ENCODE measurements at regions of chr12 and their contacts with region 1.

Region 1: GRCh38 chr12:127108360-127109215 is 1158.4 kb upstream of the TMEM132C start:
- DNase-seq: peak; percentile 38 to 88 (median 72)

Region 2: GRCh38 chr12:127293507-127294310 is 185.1 kb after region 1 on chr12:
- intact Hi-C with region 1: loop called (anchors 5 kb)
- DNase-seq: peak; percentile 10 to 84 (median 62)

Measured in head of caudate nucleus (tissue), 42 donors.